IMR-90 (cell line): ENCODE measurements at regions of chr7 and their contacts with region 1.

Region 1: GRCh38 chr7:28298870-28299518 is 113.3 kb upstream of the CREB5 start:
- DNase-seq: peak; percentile 78
- ATAC-seq: peak; percentile 98
- H3K4me3 ChIP-seq: no peak overlapping the region
- H3K27ac ChIP-seq: no peak overlapping the region
- H3K4me1 ChIP-seq: no peaks in the 10 kb centered on the region
- H3K27me3 ChIP-seq: peaks cover 1% of the 10 kb centered on the region; the same call in 1 of the 2 replicates
- CTCF ChIP-seq: peak; percentile 66
- POLR2A ChIP-seq: no peak
- RAD21 ChIP-seq: peak; percentile 76

Region 2: DNA sequence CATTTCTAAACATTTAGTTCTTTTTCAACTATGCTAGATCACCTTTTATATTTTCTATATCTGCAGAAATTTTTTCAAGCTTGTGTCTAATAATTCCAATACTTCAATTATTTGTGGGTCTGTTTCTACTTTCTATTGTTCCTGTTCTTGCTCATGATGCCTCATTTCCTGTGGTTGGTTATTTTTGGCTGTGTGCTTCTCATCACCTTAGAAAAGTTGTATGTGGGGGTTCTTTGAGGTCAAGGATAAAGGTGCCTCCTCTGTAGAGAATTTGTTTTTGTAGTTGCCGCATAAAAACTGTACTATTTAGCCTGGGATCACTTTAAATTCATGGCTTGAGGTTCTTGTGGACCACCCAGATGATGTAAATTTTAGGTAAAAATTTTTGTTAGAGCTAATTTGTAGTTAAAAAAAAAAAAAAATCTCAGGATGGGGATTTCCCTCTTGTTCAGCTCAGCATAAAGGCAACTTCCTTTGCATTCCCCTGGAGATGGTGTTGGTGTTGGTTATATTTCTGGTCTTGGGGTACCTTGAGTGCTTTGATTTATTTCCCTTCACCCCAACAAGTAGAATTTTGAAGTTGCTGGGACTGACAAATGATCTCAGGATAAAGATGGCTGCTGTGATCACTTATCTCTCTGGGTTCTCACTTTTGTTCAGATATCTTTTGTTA is 91.4 kb before region 1 on chr7:
- CTCF ChIA-PET with region 1: no interaction called
- POLR2A ChIA-PET with region 1: no interaction called
- dilution Hi-C with region 1: no loop called
- in situ Hi-C with region 1: no loop called
- intact Hi-C with region 1: no loop called
- DNase-seq: no peak
- ATAC-seq: no peak
- H3K4me3 ChIP-seq: no peak overlapping the region
- H3K27ac ChIP-seq: no peak overlapping the region
- H3K4me1 ChIP-seq: peaks cover 4% of the 10 kb centered on the region
- H3K27me3 ChIP-seq: no peaks in the 10 kb centered on the region
- CTCF ChIP-seq: no peak
- POLR2A ChIP-seq: no peak
- RAD21 ChIP-seq: no peak

Region 3: DNA sequence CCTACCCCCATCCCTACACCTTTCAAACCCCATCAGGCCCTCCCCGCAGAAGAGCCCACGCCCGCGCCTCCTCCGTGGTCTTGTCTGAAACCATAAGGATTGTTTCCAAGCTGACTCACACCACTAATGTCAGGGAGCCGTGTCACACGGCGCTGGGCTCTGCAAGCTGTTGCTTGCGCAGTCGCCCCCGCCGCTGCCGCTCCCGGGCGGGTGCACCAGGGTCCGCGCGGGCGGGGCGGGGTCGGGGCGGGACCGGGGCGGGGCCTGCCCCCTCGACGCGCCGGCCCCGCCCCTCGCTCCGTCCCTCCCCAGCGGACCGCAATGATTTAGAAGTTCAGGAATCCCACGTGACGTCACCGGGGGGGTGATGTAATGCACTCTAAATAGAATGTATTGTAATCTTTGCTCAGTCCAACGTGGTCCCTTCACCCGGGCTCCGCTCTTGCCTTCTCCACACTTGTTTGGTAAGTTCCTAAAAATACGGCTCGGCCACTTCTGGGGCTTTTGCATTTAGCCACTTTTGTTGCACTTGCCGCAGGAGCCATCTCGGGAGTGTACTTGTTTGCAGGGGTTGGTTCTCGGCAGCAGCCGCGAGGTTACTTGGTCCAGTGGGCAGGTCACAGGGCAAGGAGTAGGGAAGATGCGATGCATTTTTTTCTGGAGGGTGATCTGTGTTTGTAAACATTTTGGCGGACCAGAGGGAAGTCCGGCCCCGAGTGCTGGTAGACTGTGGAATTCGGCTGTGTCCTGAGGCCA is 110.1 kb after region 1 on chr7:
- CTCF ChIA-PET with region 1: no interaction called
- POLR2A ChIA-PET with region 1: no interaction called
- dilution Hi-C with region 1: no loop called
- in situ Hi-C with region 1: loop called (anchors 10 kb)
- intact Hi-C with region 1: loop called (anchors 1 kb)
- DNase-seq: peak; percentile 98
- ATAC-seq: peak; percentile 90
- H3K4me3 ChIP-seq: peak overlapping the region; percentile 66
- H3K27ac ChIP-seq: peak overlapping the region; percentile 78
- H3K4me1 ChIP-seq: peaks cover 7% of the 10 kb centered on the region; the same call in 1 of the 2 replicates
- H3K27me3 ChIP-seq: no peaks in the 10 kb centered on the region
- CTCF ChIP-seq: no peak
- POLR2A ChIP-seq: peak; percentile 95
- RAD21 ChIP-seq: no peak

Region 4: DNA sequence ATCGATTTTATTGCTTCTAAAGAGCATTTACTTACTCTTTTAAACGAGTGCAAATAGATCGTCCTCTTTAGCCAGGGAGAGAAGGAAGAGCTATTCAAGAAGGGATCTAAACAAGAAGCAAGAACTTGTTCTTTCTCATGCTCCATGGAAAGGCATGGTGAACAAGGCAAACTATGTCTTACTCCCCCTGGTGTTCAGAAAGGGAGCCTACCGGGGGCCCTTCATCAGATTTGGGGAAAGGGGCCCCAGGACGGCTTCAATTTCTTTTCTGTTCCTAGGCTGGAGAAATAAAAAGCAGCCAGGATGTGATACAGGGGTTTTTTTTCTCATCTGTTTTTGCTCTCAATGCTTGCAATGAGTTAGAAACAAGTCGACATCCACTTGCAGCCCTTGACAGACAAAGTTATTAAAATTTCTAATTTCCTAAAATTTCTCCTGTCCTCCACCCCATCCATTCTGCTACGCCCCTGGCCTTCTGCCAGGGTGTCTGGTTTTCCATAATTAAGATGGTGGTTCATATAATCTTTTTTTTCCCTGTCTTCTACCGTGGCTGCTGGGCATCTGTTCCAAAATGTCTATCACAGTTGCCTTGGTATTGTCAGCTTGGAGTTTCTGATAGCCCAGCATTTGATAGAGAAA is 327.7 kb after region 1 on chr7:
- CTCF ChIA-PET with region 1: no interaction called
- POLR2A ChIA-PET with region 1: no interaction called
- dilution Hi-C with region 1: no loop called
- in situ Hi-C with region 1: no loop called
- intact Hi-C with region 1: loop called (anchors 2 kb)
- DNase-seq: peak; percentile 36
- ATAC-seq: peak; percentile 38; the same call in 1 of the 2 replicates
- H3K4me3 ChIP-seq: no peak overlapping the region
- H3K27ac ChIP-seq: no peak overlapping the region
- H3K4me1 ChIP-seq: peaks cover 6% of the 10 kb centered on the region
- H3K27me3 ChIP-seq: no peaks in the 10 kb centered on the region
- CTCF ChIP-seq: peak; percentile 52
- POLR2A ChIP-seq: no peak
- RAD21 ChIP-seq: peak; percentile 51

Region 5: GRCh38 chr7:28768628-28769027 is 469.6 kb after region 1 on chr7:
- CTCF ChIA-PET with region 1: no interaction called
- POLR2A ChIA-PET with region 1: no interaction called
- dilution Hi-C with region 1: no loop called
- in situ Hi-C with region 1: no loop called
- intact Hi-C with region 1: loop called (anchors 10 kb)
- DNase-seq: peak; percentile 87
- ATAC-seq: peak; percentile 46; the same call in 1 of the 2 replicates
- H3K4me3 ChIP-seq: no peak overlapping the region
- H3K27ac ChIP-seq: no peak overlapping the region
- H3K4me1 ChIP-seq: 0 out of 2 replicates have a peak, but pooled peaks cover 3% of the 10 kb centered on the region
- H3K27me3 ChIP-seq: no peaks in the 10 kb centered on the region
- CTCF ChIP-seq: no peak
- POLR2A ChIP-seq: no peak
- RAD21 ChIP-seq: no peak

Region 6: GRCh38 chr7:28921822-28922221 is 622.8 kb after region 1 on chr7:
- CTCF ChIA-PET with region 1: no interaction called
- POLR2A ChIA-PET with region 1: no interaction called
- dilution Hi-C with region 1: no loop called
- in situ Hi-C with region 1: no loop called
- intact Hi-C with region 1: loop called (anchors 2 kb)
- DNase-seq: peak; percentile 68
- ATAC-seq: peak; percentile 96
- H3K4me3 ChIP-seq: no peak overlapping the region
- H3K27ac ChIP-seq: no peak overlapping the region
- H3K4me1 ChIP-seq: peaks cover 1% of the 10 kb centered on the region; the same call in 1 of the 2 replicates
- H3K27me3 ChIP-seq: peaks cover 12% of the 10 kb centered on the region
- CTCF ChIP-seq: peak; percentile 82
- POLR2A ChIP-seq: no peak
- RAD21 ChIP-seq: peak; percentile 63